Left cardiac atrium (tissue), 4 donors: ENCODE measurements at regions of chr2 and their contacts with region 1.

Region 1: DNA sequence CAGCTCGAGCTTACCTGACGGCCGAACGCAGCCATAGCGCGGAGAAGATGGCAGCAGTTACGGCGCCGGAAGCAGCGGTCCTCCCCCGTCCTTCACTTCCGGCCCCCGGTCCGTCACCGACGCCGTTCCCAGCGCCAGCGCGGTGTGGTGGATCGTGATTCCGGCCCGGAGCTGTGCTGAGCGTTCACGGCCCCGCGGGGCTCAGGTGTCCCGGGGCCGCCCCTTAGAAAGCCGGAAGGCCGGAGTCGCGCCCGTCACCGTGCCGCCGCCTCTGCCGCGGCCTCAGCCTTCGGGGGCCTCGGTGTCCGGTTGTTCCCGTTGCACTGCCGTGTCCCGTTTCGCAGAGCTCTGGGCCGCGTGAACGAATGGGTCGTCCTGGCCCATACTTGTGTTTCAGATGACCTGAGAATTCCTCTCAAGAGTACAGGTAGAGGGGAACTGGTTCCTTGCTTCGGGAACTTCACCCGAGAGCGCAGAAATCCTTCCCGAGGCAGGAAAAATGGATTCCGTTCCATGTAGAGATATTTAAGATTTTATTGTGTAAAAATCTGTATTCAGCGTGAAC is at the start of gene MTERF4:
- DNase-seq: peak; percentile 89
- ATAC-seq: peak; percentile 99 to 100
- total RNA-seq, gene MTERF4: 19.1 to 21.7 TPM

Region 2: DNA sequence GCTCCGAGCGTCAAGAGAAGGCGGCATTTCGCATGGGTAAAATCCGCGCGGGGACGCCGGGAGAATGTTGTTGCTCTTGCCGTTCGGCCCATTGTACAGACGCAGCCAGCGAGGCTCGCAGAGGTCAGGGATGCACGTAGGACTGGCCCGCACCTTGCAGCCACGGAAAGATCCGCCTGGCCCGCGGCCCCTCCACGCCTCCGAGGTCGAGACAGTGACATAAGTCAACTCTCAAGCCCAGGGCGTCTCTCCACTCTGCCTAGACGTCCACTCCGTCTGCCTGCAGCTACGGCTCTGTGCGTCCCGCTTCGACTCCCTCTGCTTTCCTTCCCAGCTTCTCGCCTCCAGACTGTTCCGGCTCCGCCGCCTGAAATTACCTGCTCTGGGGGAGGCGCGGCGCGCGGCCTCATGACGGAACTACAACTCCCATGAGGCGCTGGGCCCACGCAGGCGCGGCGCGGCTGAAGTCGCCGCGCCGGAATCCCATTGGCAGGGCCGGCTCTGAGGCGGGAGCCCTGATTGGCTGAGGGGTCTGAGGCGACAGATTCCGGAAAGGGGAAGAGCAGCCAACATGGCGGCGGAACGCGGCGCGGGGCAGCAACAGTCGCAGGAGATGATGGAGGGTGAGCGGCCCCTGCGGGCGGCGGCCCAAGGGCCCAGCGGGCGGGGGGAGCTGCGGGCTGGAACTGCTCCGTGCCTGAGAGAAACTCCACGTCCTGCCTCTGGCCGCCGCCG is 47.8 kb after region 1 on chr2 and contains the start of gene PPP1R7:
- intact Hi-C with region 1: loop called in 1 of 2 experiments (anchors 5 kb)
- DNase-seq: peak; percentile 96
- ATAC-seq: peak; percentile 96 to 98
- total RNA-seq, gene PPP1R7: 61.9 to 68.4 TPM

Region 3: DNA sequence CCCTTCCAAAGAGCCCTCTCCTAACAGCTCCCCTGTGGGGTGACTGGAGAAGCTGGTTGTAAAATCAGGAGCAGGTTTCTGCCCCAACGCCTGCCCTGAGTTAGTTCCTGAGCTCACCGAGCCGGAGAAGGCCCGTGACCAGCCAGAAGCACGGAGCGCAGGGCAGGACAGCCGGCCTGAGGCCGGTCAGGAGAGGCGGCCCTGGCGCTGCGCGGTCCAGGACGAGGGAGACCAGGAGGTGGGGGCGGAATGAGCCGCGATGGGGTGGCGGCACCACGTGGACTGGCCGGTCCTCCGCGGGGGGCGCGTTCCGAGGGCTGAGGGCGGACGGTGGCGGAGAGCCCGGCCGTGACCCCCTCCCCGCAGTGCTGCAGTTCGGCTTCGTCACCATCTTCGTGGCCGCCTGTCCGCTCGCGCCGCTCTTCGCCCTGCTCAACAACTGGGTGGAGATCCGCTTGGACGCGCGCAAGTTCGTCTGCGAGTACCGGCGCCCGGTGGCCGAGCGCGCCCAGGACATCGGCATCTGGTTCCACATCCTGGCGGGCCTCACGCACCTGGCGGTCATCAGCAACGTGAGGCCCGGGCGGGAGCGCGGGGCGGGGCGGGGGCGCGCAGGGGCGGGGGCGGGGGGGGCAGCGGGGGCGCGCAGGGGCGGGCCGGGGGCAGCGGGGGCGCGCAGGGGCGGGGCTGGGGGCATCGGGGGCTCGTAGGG is 115.2 kb after region 1 on chr2:
- intact Hi-C with region 1: loop called in 1 of 2 experiments (anchors 5 kb)
- DNase-seq: peak; percentile 74
- ATAC-seq: peak; percentile 83

Region 4: GRCh38 chr2:241232736-241233554 is 130.6 kb after region 1 on chr2:
- intact Hi-C with region 1: no loop called
- DNase-seq: no peak
- ATAC-seq: no peak